GM23248 (cell line): ENCODE measurements at regions of chr7 and their contacts with region 1.

Region 1: DNA sequence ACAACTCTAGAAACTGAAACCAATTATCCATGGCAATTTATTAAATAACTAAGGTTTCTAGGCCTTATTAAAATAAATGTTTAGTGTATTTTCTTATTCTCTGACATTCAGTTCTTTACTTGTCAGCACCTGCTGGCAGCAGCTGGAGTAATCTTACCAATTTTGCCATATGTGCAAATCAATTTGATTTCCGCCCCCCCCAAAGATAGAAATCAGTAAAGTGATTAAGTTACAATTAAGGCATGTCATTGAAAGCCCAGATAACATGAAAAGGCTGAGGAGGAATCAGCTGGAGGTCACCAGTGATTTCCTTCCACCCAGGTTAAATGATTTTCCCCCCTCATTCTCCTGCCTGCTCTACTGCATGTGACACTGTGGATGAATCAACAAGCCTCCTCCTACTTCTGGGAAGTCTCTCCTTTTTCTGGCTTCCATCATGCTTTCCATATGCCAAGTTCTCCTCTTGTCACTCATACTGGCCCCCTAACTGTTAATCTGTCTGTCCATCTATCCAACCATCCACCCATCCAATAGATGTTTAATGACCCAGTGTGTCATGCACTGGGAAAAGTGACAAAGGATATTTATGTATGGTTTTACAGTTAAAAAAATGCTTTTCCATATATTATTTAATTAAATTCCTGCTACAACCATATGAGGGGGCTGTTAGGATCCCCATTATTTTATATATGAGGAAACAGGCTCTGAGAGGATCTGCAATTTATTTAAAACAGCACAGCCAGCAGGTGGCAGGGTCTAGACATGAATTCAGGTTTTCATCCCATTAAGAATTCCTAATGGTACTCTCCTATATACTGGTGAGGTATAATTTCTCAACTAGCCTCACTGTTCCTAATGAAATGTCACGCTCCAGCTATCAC is 116.5 kb downstream of the ATXN7L1 start:
- DNase-seq: peak; percentile 78
- H3K4me3 ChIP-seq: no peak overlapping the region
- H3K27ac ChIP-seq: peak overlapping the region; percentile 28
- H3K4me1 ChIP-seq: peaks cover 19% of the 10 kb centered on the region
- H3K27me3 ChIP-seq: no peaks in the 10 kb centered on the region

Region 2: GRCh38 chr7:106009403-106010226 is 249.7 kb after region 1 on chr7:
- in situ Hi-C with region 1: loop called (anchors 10 kb)
- DNase-seq: peak; percentile 99
- H3K4me3 ChIP-seq: peak overlapping the region; percentile 46
- H3K27ac ChIP-seq: peak overlapping the region; percentile 64
- H3K4me1 ChIP-seq: peaks cover 7% of the 10 kb centered on the region; the same call in 1 of the 2 replicates
- H3K27me3 ChIP-seq: peaks cover 6% of the 10 kb centered on the region; the same call in 1 of the 2 replicates

Region 3: DNA sequence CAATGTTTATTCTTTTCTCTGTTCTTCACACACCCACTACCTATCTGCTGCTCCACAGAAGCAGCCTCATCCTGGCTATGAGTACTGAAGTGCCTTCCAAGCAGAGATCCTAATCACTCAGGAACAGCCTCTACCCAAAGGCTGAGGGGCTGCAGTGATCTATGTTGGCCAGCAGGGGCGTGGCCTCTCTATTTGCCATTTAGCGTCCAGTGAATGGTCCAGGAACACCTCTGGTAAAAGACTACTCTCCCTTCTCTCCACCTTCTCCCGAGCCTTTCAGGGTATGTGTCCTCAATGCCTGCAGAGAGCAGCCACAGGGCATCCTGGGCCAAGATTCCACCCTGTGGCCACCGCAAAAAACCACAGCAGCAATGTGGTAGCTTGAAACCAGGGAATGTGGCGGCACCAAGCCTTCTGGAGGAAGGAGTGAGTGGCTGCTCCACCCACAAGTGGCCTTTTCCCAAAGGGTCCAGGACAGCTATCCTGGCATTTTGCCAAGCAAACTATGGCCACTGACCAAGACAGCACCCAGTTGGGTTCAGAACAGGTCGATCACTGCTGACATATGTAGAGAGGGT is 281.3 kb after region 1 on chr7:
- in situ Hi-C with region 1: loop called (anchors 10 kb)
- DNase-seq: peak; percentile 71
- H3K4me3 ChIP-seq: no peak overlapping the region
- H3K27ac ChIP-seq: no peak overlapping the region
- H3K4me1 ChIP-seq: peaks cover 36% of the 10 kb centered on the region
- H3K27me3 ChIP-seq: peaks cover 8% of the 10 kb centered on the region

Region 4: GRCh38 chr7:106153891-106154449 is 394.1 kb after region 1 on chr7:
- in situ Hi-C with region 1: loop called (anchors 10 kb)
- DNase-seq: peak; percentile 91
- H3K4me3 ChIP-seq: peak overlapping the region; percentile 58
- H3K27ac ChIP-seq: no peak overlapping the region
- H3K4me1 ChIP-seq: 0 out of 2 replicates have a peak, but pooled peaks cover 2% of the 10 kb centered on the region
- H3K27me3 ChIP-seq: peaks cover 2% of the 10 kb centered on the region